Ascending aorta (tissue), 2 donors: ENCODE measurements at regions of chr7 and their contacts with region 1.

Region 1: DNA sequence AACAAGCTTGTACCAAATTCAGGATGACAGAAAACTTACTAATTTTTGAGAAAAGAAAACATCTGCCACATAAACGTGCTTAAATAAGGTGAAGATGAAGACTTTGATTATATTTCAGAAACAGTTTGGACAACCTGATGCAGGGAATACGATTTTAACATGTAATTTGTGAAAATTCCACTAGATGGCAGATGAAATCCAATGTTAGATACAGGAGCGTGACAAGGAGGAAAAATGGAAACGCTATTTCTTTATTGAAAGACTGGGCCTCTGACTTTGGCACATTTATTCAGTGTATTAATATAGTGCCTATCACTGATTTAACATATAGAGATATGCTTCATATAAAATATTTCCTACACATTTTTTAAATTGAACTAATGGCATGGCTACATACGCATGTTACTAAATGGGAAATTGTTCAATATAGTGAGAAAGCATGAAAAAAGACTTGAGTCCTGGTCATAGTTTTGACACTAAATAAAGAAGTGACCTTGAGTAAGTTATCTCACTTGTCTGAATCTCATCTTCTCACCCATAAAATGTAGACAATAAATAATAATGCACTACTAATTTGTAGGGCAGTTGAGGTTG is 60.7 kb downstream of the CD36 start:
- DNase-seq: no peak
- H3K4me3 ChIP-seq: no peak overlapping the region
- H3K27ac ChIP-seq: no peak overlapping the region
- H3K4me1 ChIP-seq: peaks cover 0 to 6% of the 10 kb centered on the region in 2 donors
- H3K27me3 ChIP-seq: no peaks in the 10 kb centered on the region
- CTCF ChIP-seq: peak; percentile 59 to 67 (median 61)

Region 2: GRCh38 chr7:80974396-80975334 is 275.5 kb after region 1 on chr7:
- intact Hi-C with region 1: no loop called
- DNase-seq: no peak
- H3K4me3 ChIP-seq: no peak overlapping the region
- H3K27ac ChIP-seq: no peak overlapping the region
- H3K4me1 ChIP-seq: no peaks in the 10 kb centered on the region
- H3K27me3 ChIP-seq: no peaks in the 10 kb centered on the region
- CTCF ChIP-seq: no peak

Region 3: GRCh38 chr7:81256991-81257390 is 557.8 kb after region 1 on chr7:
- intact Hi-C with region 1: loop called (anchors 2 kb)
- DNase-seq: no peak
- H3K4me3 ChIP-seq: no peak overlapping the region
- H3K27ac ChIP-seq: no peak overlapping the region
- H3K4me1 ChIP-seq: no peaks in the 10 kb centered on the region
- H3K27me3 ChIP-seq: no peaks in the 10 kb centered on the region
- CTCF ChIP-seq: peak in 2 of 3 experiments; percentile 7 to 40

Region 4: GRCh38 chr7:81469869-81470723 is 771.0 kb after region 1 on chr7:
- intact Hi-C with region 1: loop called (anchors 1 kb)
- DNase-seq: no peak
- H3K4me3 ChIP-seq: no peak overlapping the region
- H3K27ac ChIP-seq: no peak overlapping the region
- H3K4me1 ChIP-seq: no peaks in the 10 kb centered on the region
- H3K27me3 ChIP-seq: no peaks in the 10 kb centered on the region
- CTCF ChIP-seq: peak; percentile 37 to 69 (median 50)

Region 5: DNA sequence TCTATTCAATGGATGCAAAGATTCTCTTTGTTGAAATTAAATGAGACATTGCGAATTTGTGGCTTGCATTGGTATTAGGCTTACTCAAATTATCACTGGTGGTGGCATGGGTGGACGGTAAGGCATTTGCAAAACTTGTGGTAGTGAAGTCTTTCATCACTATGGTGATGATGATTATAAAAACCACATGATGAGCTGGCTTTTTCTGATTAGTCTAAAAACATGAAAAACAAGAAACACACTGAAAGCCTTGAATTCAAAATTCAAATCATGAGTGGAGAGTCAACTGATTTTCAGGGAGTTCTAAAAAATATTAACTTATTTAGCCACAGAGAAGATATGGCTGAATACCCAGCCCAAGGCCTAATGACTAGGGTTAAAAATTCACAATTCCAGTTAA is 1170.5 kb after region 1 on chr7:
- intact Hi-C with region 1: no loop called
- DNase-seq: no peak
- H3K4me3 ChIP-seq: no peak overlapping the region
- H3K27ac ChIP-seq: no peak overlapping the region
- H3K4me1 ChIP-seq: no peaks in the 10 kb centered on the region
- H3K27me3 ChIP-seq: no peaks in the 10 kb centered on the region
- CTCF ChIP-seq: no peak